Endothelial cell of umbilical vein (primary cell): ENCODE measurements at regions of chr1 and their contacts with region 1.

Region 1: GRCh38 chr1:113677250-113678158 is 81.8 kb downstream of the PHTF1 start:
- DNase-seq: peak; percentile 67
- H3K4me3 ChIP-seq: no peak overlapping the region
- H3K27ac ChIP-seq: no peak overlapping the region
- H3K4me1 ChIP-seq: peaks cover 8% of the 10 kb centered on the region
- H3K27me3 ChIP-seq: no peaks in the 10 kb centered on the region
- CTCF ChIP-seq: peak; percentile 18 to 33
- POLR2A ChIP-seq: no peak

Region 2: GRCh38 chr1:113133038-113133437 is 544.5 kb before region 1 on chr1:
- CTCF ChIA-PET with region 1: interaction called, 12 read pairs
- POLR2A ChIA-PET with region 1: no interaction called
- dilution Hi-C with region 1: no loop called
- intact Hi-C with region 1: no loop called
- DNase-seq: no peak
- H3K4me3 ChIP-seq: no peak overlapping the region
- H3K27ac ChIP-seq: no peak overlapping the region
- H3K4me1 ChIP-seq: peaks cover 10% of the 10 kb centered on the region
- H3K27me3 ChIP-seq: no peaks in the 10 kb centered on the region
- CTCF ChIP-seq: no peak
- POLR2A ChIP-seq: no peak

Region 3: DNA sequence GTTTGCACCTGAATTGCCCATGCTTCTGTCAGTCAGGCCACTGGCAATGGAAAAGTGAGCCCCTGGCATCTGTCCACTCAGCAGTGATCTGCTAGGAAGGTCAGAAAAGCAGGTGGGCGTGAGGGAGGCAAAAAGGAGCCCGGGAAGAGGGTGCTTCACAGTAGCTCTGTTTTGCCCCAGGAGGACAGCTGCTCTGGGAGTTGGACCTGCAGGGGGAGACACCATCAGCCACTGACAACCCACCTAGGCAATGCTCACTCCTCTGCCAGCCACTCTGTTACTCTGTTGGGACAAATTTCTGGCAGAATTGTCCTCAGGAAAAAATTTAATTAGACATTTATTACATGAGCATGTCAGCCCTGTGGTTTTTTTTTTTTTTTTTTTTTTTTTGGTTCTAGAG is 458.1 kb before region 1 on chr1:
- CTCF ChIA-PET with region 1: interaction called, 5 read pairs
- POLR2A ChIA-PET with region 1: no interaction called
- dilution Hi-C with region 1: no loop called
- intact Hi-C with region 1: loop called (anchors 1 kb)
- DNase-seq: no peak
- H3K4me3 ChIP-seq: no peak overlapping the region
- H3K27ac ChIP-seq: no peak overlapping the region
- H3K4me1 ChIP-seq: no peaks in the 10 kb centered on the region
- H3K27me3 ChIP-seq: no peaks in the 10 kb centered on the region
- CTCF ChIP-seq: peak in 1 of 2 donors; percentile 20
- POLR2A ChIP-seq: no peak

Region 4: GRCh38 chr1:113369699-113370098 is 307.8 kb before region 1 on chr1:
- CTCF ChIA-PET with region 1: no interaction called
- POLR2A ChIA-PET with region 1: no interaction called
- dilution Hi-C with region 1: no loop called
- intact Hi-C with region 1: loop called (anchors 5 kb)
- DNase-seq: no peak
- H3K4me3 ChIP-seq: no peak overlapping the region
- H3K27ac ChIP-seq: no peak overlapping the region
- H3K4me1 ChIP-seq: no peaks in the 10 kb centered on the region
- H3K27me3 ChIP-seq: peaks cover 0 to 4% of the 10 kb centered on the region in 2 experiments
- CTCF ChIP-seq: no peak
- POLR2A ChIP-seq: no peak

Region 5: GRCh38 chr1:113452921-113453770 is 224.4 kb before region 1 on chr1:
- CTCF ChIA-PET with region 1: interaction called, 4 read pairs
- POLR2A ChIA-PET with region 1: no interaction called
- dilution Hi-C with region 1: no loop called
- intact Hi-C with region 1: loop called (anchors 1 kb)
- DNase-seq: peak; percentile 60
- H3K4me3 ChIP-seq: no peak overlapping the region
- H3K27ac ChIP-seq: no peak overlapping the region
- H3K4me1 ChIP-seq: peaks cover 30% of the 10 kb centered on the region
- H3K27me3 ChIP-seq: no peaks in the 10 kb centered on the region
- CTCF ChIP-seq: peak; percentile 19 to 44
- POLR2A ChIP-seq: no peak

Region 6: DNA sequence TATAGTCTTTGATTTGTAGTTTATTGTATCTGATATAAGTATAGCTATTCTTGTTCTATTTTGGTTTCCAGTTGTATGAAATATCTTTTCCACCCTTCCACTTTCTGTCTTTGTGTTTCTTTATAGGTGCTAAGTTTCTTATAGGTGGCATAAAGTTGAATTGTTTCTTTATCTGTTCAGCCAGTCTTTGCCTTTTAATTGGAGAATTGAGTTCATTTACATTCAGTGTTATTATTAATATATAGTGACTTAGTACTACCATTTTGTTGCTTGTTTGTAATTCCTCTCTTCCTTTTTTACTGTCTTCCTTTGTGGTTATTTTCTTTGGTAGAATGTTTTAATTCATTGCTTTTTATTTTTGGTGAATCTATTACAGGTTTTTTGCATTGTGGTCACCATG is 209.5 kb before region 1 on chr1:
- CTCF ChIA-PET with region 1: no interaction called
- POLR2A ChIA-PET with region 1: no interaction called
- dilution Hi-C with region 1: no loop called
- intact Hi-C with region 1: no loop called
- DNase-seq: no peak
- H3K4me3 ChIP-seq: no peak overlapping the region
- H3K27ac ChIP-seq: no peak overlapping the region
- H3K4me1 ChIP-seq: no peaks in the 10 kb centered on the region
- H3K27me3 ChIP-seq: no peaks in the 10 kb centered on the region
- CTCF ChIP-seq: no peak
- POLR2A ChIP-seq: no peak